IMR-90 (cell line): ENCODE measurements at regions of chr9 and their contacts with region 1.

Region 1: GRCh38 chr9:132669698-132670456 is at the start of gene DDX31:
- DNase-seq: peak; percentile 76
- ATAC-seq: peak; percentile 92
- H3K4me3 ChIP-seq: peak within 1 kb of the TSS; percentile 72
- H3K27ac ChIP-seq: peak within 1 kb of the TSS; percentile 95
- H3K4me1 ChIP-seq: peaks cover 2% of the 10 kb centered on the region; the same call in 1 of the 2 replicates
- H3K27me3 ChIP-seq: no peaks in the 10 kb centered on the region
- CTCF ChIP-seq: no peak
- POLR2A ChIP-seq: peak; percentile 89
- RAD21 ChIP-seq: no peak
- total RNA-seq, gene DDX31: 12.5 and 14.0 TPM in 2 replicates

Region 2: DNA sequence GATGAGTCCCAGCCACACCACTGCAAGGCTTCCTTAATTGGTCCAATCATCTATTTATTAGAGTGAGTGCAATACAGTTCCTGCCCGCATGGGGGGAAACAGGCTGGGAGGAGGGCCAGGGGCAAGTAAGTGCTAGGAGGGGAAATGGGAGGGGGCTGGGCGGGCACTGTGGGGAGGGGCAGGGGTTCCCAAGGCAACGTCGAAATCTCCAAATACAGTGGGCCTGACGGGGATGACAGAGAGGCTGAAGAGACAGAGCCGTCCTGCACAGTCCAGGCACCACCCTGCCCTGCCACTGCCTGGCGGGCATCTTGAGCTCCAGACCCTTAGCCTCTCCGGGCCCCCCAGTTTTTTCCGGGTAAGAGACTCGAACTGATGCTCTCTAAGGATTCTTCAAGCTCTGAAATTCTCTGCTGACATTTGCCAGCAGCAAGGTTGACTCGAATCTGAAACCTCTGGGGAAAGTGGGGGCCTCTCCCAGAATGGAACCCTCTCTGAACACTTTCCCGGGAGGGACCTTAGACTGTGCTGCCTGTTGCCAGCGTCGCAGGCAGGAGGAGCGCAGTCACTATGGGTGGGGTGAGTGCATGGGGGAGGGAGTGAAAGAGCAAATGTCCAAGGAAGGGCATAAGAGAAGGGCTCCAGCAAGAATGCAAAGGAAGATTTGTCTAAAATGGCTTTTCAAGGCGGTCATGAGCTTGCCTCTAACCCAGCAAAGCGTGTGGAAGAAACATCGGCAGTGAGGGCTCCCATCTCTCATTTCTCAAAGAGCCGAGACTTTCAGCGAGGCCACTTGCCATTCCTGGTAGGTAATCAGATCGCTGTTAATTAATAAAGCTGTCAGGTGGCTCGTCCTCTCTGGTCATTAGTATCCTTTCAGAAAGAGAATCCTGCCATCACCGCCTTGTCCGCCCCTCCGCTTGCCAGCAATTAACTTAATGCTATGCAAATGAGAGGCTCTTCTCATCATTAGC is 99.3 kb after region 1 on chr9:
- CTCF ChIA-PET with region 1: no interaction called
- POLR2A ChIA-PET with region 1: no interaction called
- dilution Hi-C with region 1: no loop called
- in situ Hi-C with region 1: no loop called
- intact Hi-C with region 1: loop called (anchors 10 kb)
- DNase-seq: peak; percentile 25
- ATAC-seq: peak; percentile 76
- H3K4me3 ChIP-seq: peak overlapping the region; percentile 83
- H3K27ac ChIP-seq: peak overlapping the region; percentile 77; the same call in 1 of the 2 replicates
- H3K4me1 ChIP-seq: peaks cover 6% of the 10 kb centered on the region; the same call in 1 of the 2 replicates
- H3K27me3 ChIP-seq: peaks cover 3% of the 10 kb centered on the region
- CTCF ChIP-seq: peak; percentile 31
- POLR2A ChIP-seq: no peak
- RAD21 ChIP-seq: no peak

Region 3: GRCh38 chr9:132901856-132902831 is 232.3 kb after region 1 on chr9:
- CTCF ChIA-PET with region 1: no interaction called
- POLR2A ChIA-PET with region 1: no interaction called
- dilution Hi-C with region 1: no loop called
- in situ Hi-C with region 1: no loop called
- intact Hi-C with region 1: loop called (anchors 5 kb)
- DNase-seq: peak; percentile 83
- ATAC-seq: peak; percentile 99
- H3K4me3 ChIP-seq: no peak overlapping the region
- H3K27ac ChIP-seq: no peak overlapping the region
- H3K4me1 ChIP-seq: no peaks in the 10 kb centered on the region
- H3K27me3 ChIP-seq: no peaks in the 10 kb centered on the region
- CTCF ChIP-seq: peak; percentile 88
- POLR2A ChIP-seq: no peak
- RAD21 ChIP-seq: peak; percentile 63